ENCODE measurements at regions of chr6 and their contacts with region 1.

Region 1: GRCh38 chr6:108558372-108559096 is 2.2 kb upstream of the FOXO3 start:
- DNase-seq: peak; percentile 99
- ATAC-seq: peak; percentile 64
- H3K4me3 ChIP-seq: peak overlapping the region; percentile 83 to 98 (median 96)
- H3K4me3 Mint-ChIP-seq: peak overlapping the region; percentile 100
- H3K27ac ChIP-seq: peak overlapping the region; percentile 100
- H3K27ac Mint-ChIP-seq: peak overlapping the region; percentile 100
- H3K4me1 ChIP-seq: peaks cover 17 to 20% of the 10 kb centered on the region in 2 donors
- H3K4me1 Mint-ChIP-seq: peaks cover 22% of the 10 kb centered on the region
- H3K27me3 ChIP-seq: peaks cover 0 to 6% (median 0%) of the 10 kb centered on the region in 4 experiments
- H3K27me3 Mint-ChIP-seq: peaks cover 5% of the 10 kb centered on the region
- CTCF ChIP-seq: no peak

Region 2: DNA sequence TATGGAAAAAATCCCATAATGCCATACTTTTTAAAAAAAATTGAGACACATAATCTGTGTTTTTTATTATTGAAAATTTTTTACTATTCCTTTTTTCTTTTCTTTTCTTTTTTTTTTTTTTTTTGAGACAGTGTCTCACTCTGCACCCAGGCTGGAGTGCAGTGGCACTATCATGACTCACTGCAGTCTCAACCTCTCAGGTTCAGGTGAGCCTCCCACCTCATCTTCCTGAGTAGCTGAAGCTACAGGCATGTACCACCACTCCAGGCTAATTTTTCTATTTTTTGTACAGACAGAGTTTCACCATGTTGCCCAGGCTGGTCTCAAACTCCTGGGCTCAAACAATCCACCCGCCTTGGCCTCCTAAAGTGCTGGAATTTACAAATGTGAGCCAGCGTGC is 163.2 kb before region 1 on chr6:
- CTCF ChIA-PET with region 1: no interaction called
- POLR2A ChIA-PET with region 1: no interaction called
- intact Hi-C with region 1: no loop called
- DNase-seq: no peak
- ATAC-seq: no peak
- H3K4me3 ChIP-seq: no peak overlapping the region
- H3K4me3 Mint-ChIP-seq: no peak overlapping the region
- H3K27ac ChIP-seq: no peak overlapping the region
- H3K27ac Mint-ChIP-seq: no peak overlapping the region
- H3K4me1 ChIP-seq: no peaks in the 10 kb centered on the region
- H3K4me1 Mint-ChIP-seq: peaks cover 2% of the 10 kb centered on the region
- H3K27me3 ChIP-seq: no peaks in the 10 kb centered on the region
- H3K27me3 Mint-ChIP-seq: no peaks in the 10 kb centered on the region
- CTCF ChIP-seq: no peak

Region 3: GRCh38 chr6:108541838-108542759 is 16.4 kb before region 1 on chr6:
- CTCF ChIA-PET with region 1: interaction called, 15 read pairs
- POLR2A ChIA-PET with region 1: no interaction called
- intact Hi-C with region 1: loop called (anchors 2 kb)
- DNase-seq: peak; percentile 87
- ATAC-seq: peak; percentile 84
- H3K4me3 ChIP-seq: no peak overlapping the region
- H3K4me3 Mint-ChIP-seq: no peak overlapping the region
- H3K27ac ChIP-seq: no peak overlapping the region
- H3K27ac Mint-ChIP-seq: no peak overlapping the region
- H3K4me1 ChIP-seq: peaks cover 15 to 17% of the 10 kb centered on the region in 2 donors
- H3K4me1 Mint-ChIP-seq: peaks cover 12% of the 10 kb centered on the region
- H3K27me3 ChIP-seq: peaks cover 0 to 2% (median 0%) of the 10 kb centered on the region in 4 experiments
- H3K27me3 Mint-ChIP-seq: peaks cover 9% of the 10 kb centered on the region
- CTCF ChIP-seq: peak; percentile 93

Region 4: GRCh38 chr6:108904741-108905140 is 346.2 kb after region 1 on chr6:
- CTCF ChIA-PET with region 1: no interaction called
- POLR2A ChIA-PET with region 1: no interaction called
- intact Hi-C with region 1: loop called (anchors 5 kb)
- DNase-seq: peak; percentile 56
- ATAC-seq: peak; percentile 49
- H3K4me3 ChIP-seq: no peak overlapping the region
- H3K4me3 Mint-ChIP-seq: peak overlapping the region; percentile 44
- H3K27ac ChIP-seq: peak overlapping the region; percentile 46 to 77
- H3K27ac Mint-ChIP-seq: peak overlapping the region; percentile 80
- H3K4me1 ChIP-seq: peaks cover 50 to 54% of the 10 kb centered on the region in 2 donors
- H3K4me1 Mint-ChIP-seq: peaks cover 42% of the 10 kb centered on the region
- H3K27me3 ChIP-seq: no peaks in the 10 kb centered on the region
- H3K27me3 Mint-ChIP-seq: no peaks in the 10 kb centered on the region
- CTCF ChIP-seq: no peak

Region 5: DNA sequence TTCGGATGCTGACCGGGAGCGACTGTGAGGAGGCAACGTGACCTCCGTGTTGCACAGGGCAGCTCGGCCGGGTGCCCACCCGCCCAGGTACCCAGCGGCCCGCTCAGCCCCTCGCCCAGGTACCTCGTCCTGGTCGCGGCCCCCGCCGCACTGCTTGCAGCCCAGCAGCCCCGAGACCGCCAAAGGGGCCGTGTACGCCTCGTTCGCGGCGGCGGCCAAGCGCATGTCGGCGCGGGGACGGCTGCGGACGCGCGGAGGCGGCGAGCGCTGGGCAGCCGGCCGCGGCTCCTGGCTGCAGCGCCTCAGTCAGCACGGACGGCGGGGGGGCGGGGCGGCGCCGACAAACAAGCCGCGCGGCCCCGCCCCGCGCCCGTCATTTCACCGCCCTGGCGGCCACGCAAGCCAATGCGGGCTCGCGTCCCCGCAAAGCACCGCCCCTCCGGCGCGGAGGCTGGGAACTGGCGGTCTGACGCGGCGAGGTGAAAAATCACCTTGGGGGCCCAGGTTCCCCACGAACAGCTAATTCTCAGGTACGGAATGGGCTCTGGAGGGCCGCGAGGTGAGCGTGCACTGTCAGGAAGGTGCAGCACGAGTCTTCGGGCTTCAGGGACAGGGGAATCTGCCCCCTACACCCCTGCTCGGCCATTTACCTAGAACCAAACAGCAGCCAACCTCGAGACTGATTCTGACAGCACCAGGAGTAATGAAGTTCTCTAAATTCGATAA is 450.9 kb after region 1 on chr6:
- CTCF ChIA-PET with region 1: no interaction called
- POLR2A ChIA-PET with region 1: no interaction called
- intact Hi-C with region 1: loop called (anchors 2 kb)
- DNase-seq: peak; percentile 94
- ATAC-seq: peak; percentile 98
- H3K4me3 ChIP-seq: peak overlapping the region; percentile 77 to 97 (median 89)
- H3K4me3 Mint-ChIP-seq: peak overlapping the region; percentile 98
- H3K27ac ChIP-seq: peak overlapping the region; percentile 87 to 90
- H3K27ac Mint-ChIP-seq: peak overlapping the region; percentile 97
- H3K4me1 ChIP-seq: peaks cover 32 to 52% of the 10 kb centered on the region in 2 donors
- H3K4me1 Mint-ChIP-seq: peaks cover 64% of the 10 kb centered on the region
- H3K27me3 ChIP-seq: no peaks in the 10 kb centered on the region
- H3K27me3 Mint-ChIP-seq: no peaks in the 10 kb centered on the region
- CTCF ChIP-seq: no peak